SK-N-SH (cell line): ENCODE measurements at regions of chr16 and their contacts with region 1.

Region 1: DNA sequence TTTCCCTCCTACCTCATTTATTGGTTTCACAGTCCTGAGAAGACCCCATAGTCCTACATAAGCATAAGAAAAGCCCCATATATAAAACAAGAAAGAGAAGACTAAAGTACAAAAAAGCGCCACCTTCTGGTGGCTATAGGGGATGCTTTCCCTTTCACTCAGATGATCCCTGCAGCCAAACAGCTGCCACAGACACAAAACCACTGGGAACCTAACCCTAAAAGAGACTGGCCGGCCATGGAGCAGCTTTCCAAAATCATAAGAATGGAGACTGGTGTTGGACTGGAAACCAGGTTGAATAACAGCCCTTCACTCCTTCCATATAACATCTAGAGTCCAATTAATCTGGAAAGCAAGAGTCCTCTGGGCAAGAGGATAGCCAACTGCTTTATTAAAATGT is 11.4 kb downstream of the DYNC1LI2 start:
- DNase-seq: peak; percentile 69
- H3K4me3 ChIP-seq: peak overlapping the region in 1 of 2 experiments; percentile 12; a peak in 1 of 4 replicates
- H3K27ac ChIP-seq: 0 out of 4 replicates have a peak overlapping the region, but pooled peaks of 1 of the 2 experiments have one; percentile 75
- H3K4me1 ChIP-seq: peaks cover 10 to 15% of the 10 kb centered on the region in 2 experiments; a peak in 3 of 4 replicates
- H3K27me3 ChIP-seq: no peaks in the 10 kb centered on the region
- CTCF ChIP-seq: peak; percentile 82
- EP300 ChIP-seq: no peak
- RAD21 ChIP-seq: peak; percentile 43

Region 2: DNA sequence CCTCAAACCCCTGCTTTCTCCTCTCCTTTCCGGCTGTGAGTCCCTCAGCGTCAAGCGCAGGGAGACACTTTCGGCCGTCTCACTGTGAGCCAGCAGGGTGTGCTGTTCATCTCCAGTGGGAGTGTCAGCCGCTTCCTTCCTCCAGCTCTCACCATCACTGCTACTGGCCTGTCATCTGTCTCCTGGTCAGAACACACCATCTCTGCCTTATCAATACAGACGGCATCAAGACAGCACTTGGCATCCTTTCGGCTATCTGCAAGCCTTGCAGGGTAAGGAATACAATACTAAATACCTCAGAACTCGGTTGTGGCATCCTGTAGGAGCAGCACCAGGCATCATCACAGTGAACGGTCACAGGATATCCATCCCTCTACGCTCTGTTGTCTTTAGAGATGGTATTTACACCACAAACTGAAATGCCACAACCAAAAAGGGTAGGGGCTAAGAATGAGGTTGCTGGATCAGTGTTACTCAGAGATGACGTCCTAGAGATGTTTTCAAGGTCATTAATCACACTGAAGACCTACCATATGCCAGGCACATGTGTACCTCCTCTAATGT is 22.8 kb before region 1 on chr16:
- CTCF ChIA-PET with region 1: interaction called, 15 read pairs
- POLR2A ChIA-PET with region 1: no interaction called
- DNase-seq: peak; percentile 69
- H3K4me3 ChIP-seq: no peak overlapping the region
- H3K27ac ChIP-seq: peak overlapping the region; percentile 5 to 8; a peak in 2 of 4 replicates
- H3K4me1 ChIP-seq: peaks cover 0 to 12% of the 10 kb centered on the region in 2 experiments; a peak in 1 of 4 replicates
- H3K27me3 ChIP-seq: no peaks in the 10 kb centered on the region
- CTCF ChIP-seq: peak; percentile 55
- EP300 ChIP-seq: no peak
- RAD21 ChIP-seq: peak; percentile 58

Region 3: DNA sequence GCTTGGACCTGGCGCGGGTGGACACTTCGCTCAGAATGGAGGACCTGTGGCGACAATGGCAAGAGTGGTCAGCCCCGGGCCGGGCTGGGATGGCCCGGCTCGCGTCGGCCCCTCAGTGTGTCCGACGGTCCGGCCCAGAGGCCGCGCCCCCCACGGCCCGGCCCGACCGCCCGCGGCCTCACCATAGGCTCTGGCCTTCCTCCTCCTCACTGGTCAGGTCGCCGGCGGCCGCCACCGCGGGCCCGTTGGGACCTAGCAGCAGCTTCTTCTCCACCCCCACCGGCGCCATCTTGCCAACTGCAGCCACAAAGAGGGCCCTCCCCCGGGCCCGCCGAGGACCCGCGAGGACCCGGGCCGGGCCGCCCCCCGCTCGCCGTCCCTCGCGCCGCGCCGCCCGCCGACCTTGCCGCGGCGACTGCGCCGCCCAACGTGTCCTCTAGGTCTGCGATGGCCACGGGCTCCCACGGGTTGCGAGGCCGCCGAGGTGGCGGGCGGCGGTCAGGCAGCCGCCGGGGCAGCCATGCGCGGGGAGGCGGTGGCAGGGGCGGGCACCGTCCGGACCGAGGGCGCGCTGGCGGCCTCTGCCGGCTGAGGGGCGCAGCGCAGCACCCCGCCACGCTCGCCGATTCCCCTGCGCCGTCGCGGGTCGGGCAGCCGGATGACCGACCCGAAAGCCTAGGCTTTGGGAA is 11.4 kb after region 1 on chr16 and contains the start of gene DYNC1LI2:
- CTCF ChIA-PET with region 1: interaction called, 68 read pairs
- POLR2A ChIA-PET with region 1: interaction called, 7 read pairs
- DNase-seq: peak; percentile 98
- H3K4me3 ChIP-seq: peak within 1 kb of the TSS; percentile 87 to 91
- H3K27ac ChIP-seq: peak within 1 kb of the TSS; percentile 75 to 92
- H3K4me1 ChIP-seq: peaks cover 15 to 17% of the 10 kb centered on the region in 2 experiments; a peak in 2 of 4 replicates
- H3K27me3 ChIP-seq: no peaks in the 10 kb centered on the region
- CTCF ChIP-seq: peak; percentile 65
- EP300 ChIP-seq: 0 out of 4 replicates have a peak, but pooled peaks of 1 of the 2 experiments have one; percentile 6
- RAD21 ChIP-seq: peak; percentile 40; the same call in 1 of the 2 replicates
- polyA plus RNA-seq, gene DYNC1LI2: 33.1 and 49.6 TPM in 2 replicates